T-cell (primary cell): ENCODE measurements at regions of chr14 and their contacts with region 1.

Region 1: DNA sequence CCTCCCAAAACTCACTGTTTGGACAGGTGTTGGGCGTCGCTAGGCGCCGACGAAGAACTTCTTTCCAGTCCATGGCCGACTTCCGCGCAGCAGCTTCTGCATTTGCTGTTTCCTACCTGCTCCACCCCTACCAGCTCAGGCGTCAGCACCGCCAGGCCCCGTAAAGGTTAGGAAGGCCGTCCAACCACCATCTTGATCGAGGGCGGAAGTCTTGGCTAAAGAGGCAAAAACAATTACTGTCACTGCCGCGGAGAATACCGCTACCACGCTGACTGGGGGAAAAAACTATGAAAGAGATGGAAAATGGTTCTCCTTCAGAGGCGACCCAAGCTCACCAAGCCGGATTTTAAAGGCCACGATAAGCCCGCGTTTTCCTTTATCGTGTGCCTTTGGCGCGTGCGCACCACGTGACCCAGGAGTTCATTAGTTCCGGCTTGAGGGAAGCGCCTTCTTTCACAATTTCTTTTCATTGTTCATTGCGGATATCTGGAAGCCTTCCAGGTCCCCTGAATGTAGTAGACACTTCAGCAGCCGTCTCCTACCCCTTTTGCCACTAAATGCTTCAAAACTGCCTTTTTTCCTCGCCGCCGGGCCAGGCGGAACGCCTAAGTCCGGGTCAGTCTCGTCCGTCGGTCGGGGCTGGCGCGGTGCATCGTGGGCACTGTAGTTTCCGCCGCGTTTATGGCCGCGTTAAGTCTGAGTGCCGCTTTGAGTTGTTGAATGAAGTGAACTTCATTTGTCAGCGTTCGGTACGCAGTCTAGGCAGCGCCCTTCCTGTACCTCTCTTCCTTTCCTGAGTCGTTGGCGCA is at the starts of genes PPP2R3C and PRORP:
- DNase-seq: peak; percentile 76 to 94 (median 92)
- ATAC-seq: peak; percentile 84 to 91 (median 86)
- H3K4me3 ChIP-seq: peak within 1 kb of the TSS; percentile 92 to 94
- H3K4me3 Mint-ChIP-seq: peak within 1 kb of the TSS; percentile 98 to 99 (median 98)
- H3K27ac ChIP-seq: peak within 1 kb of the TSS; percentile 99
- H3K27ac Mint-ChIP-seq: peak within 1 kb of the TSS; percentile 100
- H3K4me1 ChIP-seq: peaks cover 15 to 46% of the 10 kb centered on the region in 2 experiments
- H3K4me1 Mint-ChIP-seq: peaks cover 74 to 78% (median 75%) of the 10 kb centered on the region in 3 donors
- H3K27me3 ChIP-seq: no peaks in the 10 kb centered on the region
- H3K27me3 Mint-ChIP-seq: no peaks in the 10 kb centered on the region
- total RNA-seq, gene PPP2R3C: 28.1 to 40.5 (median 32.9) TPM
- total RNA-seq, gene PRORP: 31.9 to 43.3 (median 35.9) TPM

Region 2: GRCh38 chr14:34826661-34827060 is 295.4 kb before region 1 on chr14:
- CTCF ChIA-PET with region 1: no interaction called
- POLR2A ChIA-PET with region 1: interaction called in 1 of 2 experiments, 10 read pairs
- DNase-seq: no peak
- ATAC-seq: no peak
- H3K4me3 ChIP-seq: no peak overlapping the region
- H3K4me3 Mint-ChIP-seq: no peak overlapping the region
- H3K27ac ChIP-seq: no peak overlapping the region
- H3K27ac Mint-ChIP-seq: peak overlapping the region; percentile 62 to 68
- H3K4me1 ChIP-seq: peaks cover 0 to under 1% of the 10 kb centered on the region in 2 experiments
- H3K4me1 Mint-ChIP-seq: peaks cover 36 to 46% (median 40%) of the 10 kb centered on the region in 3 donors
- H3K27me3 ChIP-seq: no peaks in the 10 kb centered on the region
- H3K27me3 Mint-ChIP-seq: no peaks in the 10 kb centered on the region

Region 3: DNA sequence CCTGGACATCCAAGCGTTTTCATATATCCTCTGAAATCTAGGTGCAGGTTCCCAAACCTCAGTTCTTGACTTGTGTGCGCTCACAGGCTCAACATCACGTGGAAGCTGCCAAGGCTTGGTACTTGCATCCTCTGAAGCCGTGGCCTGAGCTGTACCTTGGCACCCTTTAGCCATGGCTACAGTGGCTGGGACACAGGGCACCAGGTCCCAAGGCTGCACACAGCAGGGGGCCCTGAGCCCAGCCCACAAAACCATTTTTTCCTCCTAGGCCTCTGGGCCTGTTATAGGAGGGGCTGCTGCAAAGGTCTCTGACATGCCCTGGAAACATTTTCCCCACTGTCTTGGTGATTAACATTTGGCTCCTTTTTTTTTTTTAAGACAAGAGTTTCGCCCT is 87.7 kb before region 1 on chr14:
- CTCF ChIA-PET with region 1: no interaction called
- POLR2A ChIA-PET with region 1: no interaction called
- DNase-seq: no peak
- ATAC-seq: no peak
- H3K4me3 ChIP-seq: no peak overlapping the region
- H3K4me3 Mint-ChIP-seq: no peak overlapping the region
- H3K27ac ChIP-seq: no peak overlapping the region
- H3K27ac Mint-ChIP-seq: no peak overlapping the region
- H3K4me1 ChIP-seq: no peaks in the 10 kb centered on the region
- H3K4me1 Mint-ChIP-seq: no peaks in the 10 kb centered on the region
- H3K27me3 ChIP-seq: no peaks in the 10 kb centered on the region
- H3K27me3 Mint-ChIP-seq: no peaks in the 10 kb centered on the region

Region 4: DNA sequence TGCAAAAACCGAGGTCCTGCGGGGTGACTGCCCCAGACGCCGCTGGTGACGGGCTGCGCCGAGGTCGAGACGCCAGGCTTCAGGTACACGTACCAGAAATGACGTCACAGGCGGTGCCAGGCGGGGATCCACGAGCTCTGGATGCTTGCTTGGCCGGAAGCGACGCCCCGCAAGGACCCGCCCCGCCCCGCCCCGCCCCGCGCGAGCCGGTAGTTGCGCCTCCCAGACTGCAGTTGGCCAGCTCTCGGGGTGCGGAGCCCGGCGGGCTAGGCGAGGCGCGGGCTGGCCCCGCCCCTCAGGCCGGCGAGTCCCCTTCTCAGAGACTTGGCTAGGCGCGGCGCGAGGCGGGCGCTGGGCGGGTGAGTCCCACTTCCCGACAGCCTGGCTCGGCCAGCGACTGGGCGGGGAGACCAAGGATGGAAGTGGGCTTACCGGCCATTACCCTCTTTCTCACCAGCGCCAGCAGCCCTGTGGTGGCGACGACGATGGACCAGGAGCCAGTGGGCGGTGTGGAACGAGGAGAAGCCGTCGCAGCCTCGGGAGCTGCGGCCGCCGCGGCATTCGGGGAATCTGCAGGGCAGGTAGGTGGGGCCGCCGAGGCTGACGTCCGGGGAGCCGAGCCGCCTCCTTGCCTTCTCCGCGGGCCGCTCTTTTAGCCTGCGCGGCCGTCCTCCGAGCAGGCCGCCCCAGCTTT is 75.9 kb before region 1 on chr14 and contains the start of gene FAM177A1:
- CTCF ChIA-PET with region 1: interaction called in 1 of 2 experiments, 8 read pairs
- POLR2A ChIA-PET with region 1: interaction called, 4 to 35 read pairs
- DNase-seq: peak; percentile 93 to 100 (median 100)
- ATAC-seq: peak; percentile 83 to 93 (median 91)
- H3K4me3 ChIP-seq: peak within 1 kb of the TSS; percentile 71 to 91
- H3K4me3 Mint-ChIP-seq: peak within 1 kb of the TSS; percentile 73 to 88 (median 85)
- H3K27ac ChIP-seq: peak within 1 kb of the TSS; percentile 99
- H3K27ac Mint-ChIP-seq: peak within 1 kb of the TSS; percentile 95 to 96
- H3K4me1 ChIP-seq: peaks cover 4 to 12% of the 10 kb centered on the region in 2 experiments
- H3K4me1 Mint-ChIP-seq: peaks cover 25 to 31% (median 27%) of the 10 kb centered on the region in 3 donors
- H3K27me3 ChIP-seq: no peaks in the 10 kb centered on the region
- H3K27me3 Mint-ChIP-seq: no peaks in the 10 kb centered on the region
- total RNA-seq, gene FAM177A1: 35.7 to 141 (median 38.7) TPM